Mammary epithelial cell (primary cell): ENCODE measurements at regions of chr12 and their contacts with region 1.

Region 1: GRCh38 chr12:67068761-67069450 is 200.3 kb upstream of the CAND1 start:
- DNase-seq: peak; percentile 83
- H3K4me3 ChIP-seq: peak overlapping the region; percentile 76 to 85 (median 85)
- H3K27ac ChIP-seq: peak overlapping the region; percentile 67
- H3K4me1 ChIP-seq: peaks cover 26% of the 10 kb centered on the region
- H3K27me3 ChIP-seq: no peaks in the 10 kb centered on the region
- CTCF ChIP-seq: no peak

Region 2: DNA sequence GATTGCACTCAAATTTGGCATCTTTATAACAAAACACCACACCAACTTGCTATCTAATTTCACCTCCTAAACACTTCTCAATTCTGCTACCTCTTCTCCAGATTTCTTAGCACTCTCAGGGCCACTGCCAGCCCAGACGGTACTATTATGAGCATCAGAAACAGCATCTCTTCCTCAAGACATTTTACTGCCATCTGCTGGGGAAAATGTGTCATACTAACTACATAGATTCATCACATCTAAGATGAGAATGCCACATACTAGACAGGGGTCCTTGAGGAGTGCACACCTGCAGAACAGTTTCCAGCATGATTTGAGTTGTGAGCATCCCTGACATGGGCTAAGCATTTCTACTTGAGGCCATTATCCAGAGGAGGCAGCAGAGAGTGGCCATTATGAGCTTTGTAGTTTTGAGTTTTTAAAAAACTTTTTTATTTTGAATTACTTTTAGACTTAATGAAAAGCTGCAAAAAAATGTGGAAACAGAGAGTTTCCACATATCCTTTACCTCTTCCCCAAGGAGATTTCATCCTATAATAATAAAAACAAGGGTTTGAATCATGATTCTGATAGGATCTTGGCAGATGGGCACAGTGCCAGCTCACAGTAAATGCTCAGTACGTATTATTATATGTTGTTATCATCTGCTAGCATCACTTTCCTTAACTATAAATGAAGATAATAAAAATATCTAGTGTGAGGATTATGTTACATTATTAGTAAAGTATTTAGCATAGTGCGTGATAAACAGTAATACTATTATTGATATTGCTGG is 374.8 kb before region 1 on chr12:
- CTCF ChIA-PET with region 1: no interaction called
- dilution Hi-C with region 1: no loop called
- in situ Hi-C with region 1: no loop called
- intact Hi-C with region 1: loop called (anchors 5 kb)
- DNase-seq: peak; percentile 49
- H3K4me3 ChIP-seq: no peak overlapping the region
- H3K27ac ChIP-seq: no peak overlapping the region
- H3K4me1 ChIP-seq: no peaks in the 10 kb centered on the region
- H3K27me3 ChIP-seq: no peaks in the 10 kb centered on the region
- CTCF ChIP-seq: peak; percentile 47 to 68

Region 3: GRCh38 chr12:66901138-66901932 is 167.6 kb before region 1 on chr12:
- CTCF ChIA-PET with region 1: no interaction called
- dilution Hi-C with region 1: no loop called
- in situ Hi-C with region 1: no loop called
- intact Hi-C with region 1: loop called (anchors 1 kb)
- DNase-seq: peak; percentile 24
- H3K4me3 ChIP-seq: no peak overlapping the region
- H3K27ac ChIP-seq: no peak overlapping the region
- H3K4me1 ChIP-seq: peaks cover 8% of the 10 kb centered on the region
- H3K27me3 ChIP-seq: no peaks in the 10 kb centered on the region
- CTCF ChIP-seq: no peak

Region 4: GRCh38 chr12:67111182-67111581 is 42.3 kb after region 1 on chr12:
- CTCF ChIA-PET with region 1: no interaction called
- dilution Hi-C with region 1: loop called (anchors 5 kb)
- in situ Hi-C with region 1: no loop called
- intact Hi-C with region 1: no loop called
- DNase-seq: no peak
- H3K4me3 ChIP-seq: no peak overlapping the region
- H3K27ac ChIP-seq: no peak overlapping the region
- H3K4me1 ChIP-seq: no peaks in the 10 kb centered on the region
- H3K27me3 ChIP-seq: no peaks in the 10 kb centered on the region
- CTCF ChIP-seq: no peak

Region 5: GRCh38 chr12:67222302-67222701 is 153.4 kb after region 1 on chr12:
- CTCF ChIA-PET with region 1: interaction called, 5 read pairs
- dilution Hi-C with region 1: no loop called
- in situ Hi-C with region 1: no loop called
- intact Hi-C with region 1: loop called (anchors 1 kb)
- DNase-seq: peak; percentile 45
- H3K4me3 ChIP-seq: no peak overlapping the region
- H3K27ac ChIP-seq: no peak overlapping the region
- H3K4me1 ChIP-seq: no peaks in the 10 kb centered on the region
- H3K27me3 ChIP-seq: peaks cover 2% of the 10 kb centered on the region
- CTCF ChIP-seq: peak; percentile 60 to 69